ENCODE measurements at regions of chr17 and their contacts with region 1.

Region 1: DNA sequence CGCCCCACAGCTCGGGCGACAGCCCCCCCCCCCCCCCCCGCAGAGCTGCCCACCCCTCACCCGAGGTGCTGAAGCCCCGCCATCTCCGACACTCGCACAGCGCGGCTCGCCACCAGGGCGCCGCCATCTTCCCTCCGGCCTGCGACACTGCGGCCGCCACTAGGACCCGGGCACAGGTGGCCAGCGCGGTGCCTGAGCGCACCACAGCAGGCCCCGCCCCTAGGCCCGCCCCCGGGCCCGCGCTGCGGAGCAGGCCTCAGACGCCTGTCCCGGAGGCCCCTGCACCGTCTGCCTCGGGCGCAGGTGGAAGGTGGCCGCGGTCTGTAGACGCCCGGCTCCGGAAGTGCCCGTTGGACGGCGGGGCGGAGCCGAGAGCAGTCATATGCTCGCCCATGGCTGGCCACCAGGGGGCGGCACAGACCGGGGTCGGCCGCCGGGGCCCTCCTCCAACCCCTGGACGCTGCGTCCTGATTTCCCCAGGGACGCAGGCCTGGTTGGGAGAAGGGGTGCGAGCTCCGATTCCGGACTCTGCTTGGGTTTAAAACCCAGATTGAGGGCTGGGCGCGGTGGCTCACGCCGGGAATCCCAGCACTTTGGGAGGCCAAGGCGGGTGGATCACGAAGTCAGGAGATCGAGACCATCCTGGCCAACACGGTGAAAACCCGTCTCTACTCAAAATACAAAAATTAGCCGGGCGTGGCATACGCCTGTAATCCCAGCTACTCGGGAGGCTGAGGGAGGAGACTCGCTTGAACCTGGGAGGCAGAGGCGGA is at the start of gene MRPL38:
- DNase-seq: peak; percentile 89 to 94
- ATAC-seq: peak; percentile 90 to 96 (median 94)
- H3K4me3 ChIP-seq: peak within 1 kb of the TSS; percentile 66 to 96 (median 86)
- H3K27ac ChIP-seq: peak within 1 kb of the TSS; percentile 88 to 97 (median 92)
- H3K4me1 ChIP-seq: peaks cover 6 to 26% (median 19%) of the 10 kb centered on the region in 9 donors
- H3K27me3 ChIP-seq: no peaks in the 10 kb centered on the region
- CTCF ChIP-seq: peak; percentile 87 to 100 (median 99)
- total RNA-seq, gene MRPL38: 89.6 to 144 (median 96.5) TPM

Region 2: DNA sequence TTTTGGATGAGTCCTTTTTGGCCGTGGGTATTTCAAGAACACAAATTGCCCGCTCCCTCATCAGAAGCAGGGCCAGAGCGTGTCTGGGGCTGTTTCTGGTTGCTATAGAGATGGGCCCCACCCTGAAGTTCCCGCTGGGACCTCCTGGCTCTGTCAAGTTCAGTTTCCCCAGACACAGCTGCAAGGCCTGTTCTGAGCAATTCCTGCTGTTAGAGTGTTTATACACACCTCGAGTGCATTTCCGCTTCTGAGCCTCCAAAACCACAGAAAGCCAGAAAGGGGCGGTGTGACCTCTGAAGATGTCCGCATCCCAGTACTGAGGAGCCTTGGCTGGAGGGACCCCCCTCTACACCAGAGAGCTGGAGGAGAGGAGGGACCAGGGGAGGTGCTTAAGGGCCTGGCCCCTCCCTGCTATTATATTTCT is 40.5 kb before region 1 on chr17:
- intact Hi-C with region 1: no loop called
- DNase-seq: peak; percentile 65 to 84
- ATAC-seq: peak; percentile 78 to 97 (median 92)
- H3K4me3 ChIP-seq: peak overlapping the region in 1 of 10 donors; percentile 2
- H3K27ac ChIP-seq: peak overlapping the region in 9 of 10 donors; percentile 53 to 82 (median 73)
- H3K4me1 ChIP-seq: peaks cover 11 to 39% (median 27%) of the 10 kb centered on the region in 9 donors
- H3K27me3 ChIP-seq: no peaks in the 10 kb centered on the region
- CTCF ChIP-seq: peak in 2 of 9 donors; percentile 22 to 28

Region 3: DNA sequence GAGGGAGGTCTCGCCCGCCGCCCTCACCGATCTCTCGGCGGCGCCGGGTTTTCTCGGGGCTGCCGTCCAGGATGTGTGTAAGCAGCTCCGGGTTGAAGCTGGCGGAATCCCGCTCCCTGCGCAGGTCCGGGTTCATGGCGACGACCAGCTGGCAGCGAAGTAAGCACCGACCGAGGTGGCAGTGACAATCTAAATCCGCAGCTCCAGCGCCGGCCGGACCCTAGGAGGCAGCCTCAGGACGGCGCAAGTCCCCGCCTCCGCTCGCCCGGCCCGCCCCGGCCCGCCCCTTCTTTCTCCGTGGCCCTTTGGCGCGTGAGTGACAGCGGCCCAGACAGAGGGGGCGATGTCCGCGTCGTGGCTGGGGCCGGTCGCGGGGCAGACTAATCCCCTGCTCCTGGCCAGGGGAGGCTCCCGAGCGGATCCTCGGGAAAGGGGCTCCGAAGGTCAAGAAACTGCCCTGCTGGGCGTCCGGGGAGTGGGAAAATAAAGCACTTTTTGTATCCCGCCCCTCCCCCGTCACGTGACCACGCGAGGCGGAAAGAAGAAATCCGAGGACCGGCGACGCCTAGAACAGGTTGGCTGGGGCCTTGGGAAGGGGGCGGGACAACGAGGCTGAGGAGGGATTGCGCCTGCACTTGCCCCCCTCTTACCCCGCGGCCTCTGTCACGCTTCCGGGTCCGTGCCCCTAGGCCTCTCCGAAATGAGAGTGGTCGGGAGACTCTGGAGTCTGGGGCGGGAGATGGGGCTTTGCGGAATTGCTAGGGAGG is 74.2 kb after region 1 on chr17 and contains the starts of genes ACOX1 and TEN1:
- intact Hi-C with region 1: loop called in 3 of 10 experiments (anchors 1 to 10 kb)
- DNase-seq: peak; percentile 98 to 99
- ATAC-seq: peak; percentile 97 to 99 (median 98)
- H3K4me3 ChIP-seq: peak within 1 kb of the TSS; percentile 70 to 97 (median 82)
- H3K27ac ChIP-seq: peak within 1 kb of the TSS; percentile 96 to 99 (median 98)
- H3K4me1 ChIP-seq: peaks cover 0 to 77% (median 47%) of the 10 kb centered on the region in 9 donors
- H3K27me3 ChIP-seq: no peaks in the 10 kb centered on the region
- CTCF ChIP-seq: peak in 7 of 9 donors; percentile 19 to 69 (median 46)
- total RNA-seq, gene ACOX1: 76.0 to 105 (median 94.0) TPM
- total RNA-seq, gene TEN1: 4.4 to 13.3 (median 9.0) TPM

Region 4: DNA sequence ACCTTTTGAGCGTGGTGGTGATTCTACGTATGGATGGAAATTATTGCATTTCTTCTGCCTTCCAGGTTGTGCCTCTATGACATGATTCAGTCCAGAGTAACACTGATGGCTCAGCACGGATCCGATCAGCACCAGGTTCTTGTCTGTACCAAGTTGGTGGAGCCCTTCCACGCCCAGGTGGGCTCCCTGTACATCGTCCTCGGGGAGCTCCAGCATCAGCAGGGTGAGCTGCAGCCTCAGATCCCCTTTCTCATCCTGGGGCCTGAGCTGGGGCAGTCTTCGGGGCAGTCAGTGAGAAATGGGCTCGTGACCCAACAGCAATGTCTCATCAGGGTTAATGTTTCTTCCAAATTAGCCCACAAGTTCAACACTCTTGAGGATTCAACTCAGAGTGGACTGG is 86.5 kb after region 1 on chr17:
- intact Hi-C with region 1: loop called in 2 of 10 experiments (anchors 5 to 10 kb)
- DNase-seq: no peak
- ATAC-seq: no peak
- H3K4me3 ChIP-seq: no peak overlapping the region
- H3K27ac ChIP-seq: no peak overlapping the region
- H3K4me1 ChIP-seq: peaks cover 0 to 3% (median 0%) of the 10 kb centered on the region in 9 donors
- H3K27me3 ChIP-seq: no peaks in the 10 kb centered on the region
- CTCF ChIP-seq: no peak

Region 5: DNA sequence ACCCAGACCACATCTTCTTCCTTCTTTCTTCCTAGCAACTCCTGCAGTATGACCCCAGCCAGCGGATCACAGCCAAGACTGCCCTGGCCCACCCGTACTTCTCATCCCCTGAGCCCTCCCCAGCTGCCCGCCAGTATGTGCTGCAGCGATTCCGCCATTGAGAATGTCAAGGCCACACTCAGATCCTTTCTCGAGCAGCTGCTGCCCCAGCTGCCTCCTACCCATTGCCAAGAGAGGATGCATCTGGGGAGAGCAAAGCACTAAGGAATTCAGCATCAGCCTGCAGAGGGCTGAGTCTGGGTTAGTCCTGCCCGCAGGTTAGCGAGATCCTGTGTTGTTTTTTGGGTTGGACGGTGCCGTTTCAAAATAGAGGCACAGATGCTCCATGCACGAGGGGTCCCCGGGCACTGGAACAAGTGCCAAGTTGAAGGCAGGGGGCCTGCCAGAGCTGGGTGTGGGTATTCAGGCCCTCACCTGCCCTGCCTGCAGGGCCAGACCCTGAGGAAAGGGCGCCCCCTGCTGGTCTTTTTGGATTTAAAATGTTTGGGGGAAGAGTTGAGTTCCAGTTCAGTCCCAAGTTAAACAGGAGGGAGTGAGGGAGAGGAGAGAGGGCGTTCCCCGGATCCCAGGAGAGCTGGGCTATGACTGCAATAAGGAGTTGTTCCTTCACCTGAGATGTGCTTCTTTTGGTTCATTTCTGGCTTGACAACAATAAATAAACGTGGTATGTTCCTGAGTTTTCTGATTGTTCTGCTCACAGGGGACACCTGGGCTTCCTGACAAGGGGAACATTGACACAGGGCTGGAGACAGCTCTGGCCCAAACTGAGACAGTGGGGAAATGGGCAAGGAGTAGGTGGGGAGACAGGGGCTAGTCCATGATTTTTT is 100.6 kb after region 1 on chr17:
- intact Hi-C with region 1: loop called (anchors 1 to 5 kb)
- DNase-seq: peak; percentile 66 to 78
- ATAC-seq: peak; percentile 35 to 75 (median 64)
- H3K4me3 ChIP-seq: no peak overlapping the region
- H3K27ac ChIP-seq: peak overlapping the region in 3 of 10 donors; percentile 2 to 36 (median 31)
- H3K4me1 ChIP-seq: peaks cover 0 to 15% (median 0%) of the 10 kb centered on the region in 9 donors
- H3K27me3 ChIP-seq: no peaks in the 10 kb centered on the region
- CTCF ChIP-seq: peak; percentile 63 to 80 (median 78)

Region 6: GRCh38 chr17:76264755-76265596 is 360.0 kb after region 1 on chr17 and contains the start of gene UBALD2:
- intact Hi-C with region 1: loop called in 1 of 10 experiments (anchors 10 kb)
- DNase-seq: peak; percentile 99
- ATAC-seq: peak; percentile 93 to 97 (median 96)
- H3K4me3 ChIP-seq: peak within 1 kb of the TSS; percentile 72 to 98 (median 94)
- H3K27ac ChIP-seq: peak within 1 kb of the TSS; percentile 89 to 98 (median 94)
- H3K4me1 ChIP-seq: peaks cover 26 to 83% (median 60%) of the 10 kb centered on the region in 9 donors
- H3K27me3 ChIP-seq: no peaks in the 10 kb centered on the region
- CTCF ChIP-seq: no peak
- total RNA-seq, gene UBALD2: 22.2 to 50.7 (median 27.6) TPM

Region 7: GRCh38 chr17:76296186-76296585 is 391.3 kb after region 1 on chr17:
- intact Hi-C with region 1: loop called in 1 of 10 experiments (anchors 10 kb)
- DNase-seq: no peak
- ATAC-seq: peak in 7 of 8 donors; percentile 41 to 65 (median 49)
- H3K4me3 ChIP-seq: no peak overlapping the region
- H3K27ac ChIP-seq: peak overlapping the region in 1 of 10 donors; percentile 31
- H3K4me1 ChIP-seq: peaks cover 0 to 14% (median 6%) of the 10 kb centered on the region in 9 donors
- H3K27me3 ChIP-seq: no peaks in the 10 kb centered on the region
- CTCF ChIP-seq: no peak

Measured in heart right ventricle (tissue), 16 donors.